GM12878 (cell line): ENCODE measurements at regions of chr15 and their contacts with region 1.

Region 1: DNA sequence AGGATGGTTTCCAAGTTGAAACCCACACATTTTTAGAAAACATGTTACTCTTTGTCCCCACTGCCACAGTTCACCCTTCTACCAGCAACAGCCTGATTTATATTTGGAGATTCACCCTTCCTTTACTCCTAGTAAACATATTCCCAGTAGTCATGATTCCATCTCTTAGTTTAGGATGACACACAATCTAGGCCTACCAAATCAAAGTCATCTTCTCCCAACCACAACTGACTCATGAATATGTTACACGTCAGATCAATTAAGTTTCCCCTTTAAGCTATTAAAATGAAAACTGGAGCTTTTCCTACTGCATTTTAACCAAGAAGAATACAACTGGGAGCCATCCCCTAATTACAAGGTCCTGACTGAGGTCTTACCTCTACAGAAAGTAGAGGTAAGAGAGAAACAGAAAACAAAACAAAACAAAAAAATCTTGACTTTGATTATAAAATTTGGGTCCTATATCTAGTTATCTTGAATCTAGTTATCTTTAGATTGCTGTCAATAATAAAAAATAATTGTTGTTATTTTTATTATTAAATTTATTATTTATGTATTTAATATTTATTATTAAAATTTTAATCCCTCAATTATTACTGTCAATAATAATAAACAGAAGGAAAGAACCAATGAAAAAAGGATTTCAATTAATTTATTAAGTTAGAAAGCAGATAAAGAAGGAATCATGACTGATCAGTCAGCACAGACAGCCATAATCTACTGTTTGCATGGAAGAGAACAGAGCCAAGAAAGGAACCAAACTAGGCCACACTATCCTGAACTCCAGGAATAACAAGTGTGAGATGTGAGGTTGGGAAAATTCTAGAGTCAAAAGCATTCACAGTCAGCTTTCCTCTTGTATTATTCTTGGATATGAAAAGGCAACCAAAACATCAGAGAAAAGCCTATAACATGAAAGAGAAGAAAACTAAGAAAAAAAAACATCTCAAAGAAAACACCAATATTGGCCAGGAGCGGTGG is 12.5 kb downstream of the DPH6 start:
- DNase-seq: no peak
- ATAC-seq: no peak
- H3K4me3 ChIP-seq: no peak overlapping the region
- H3K27ac ChIP-seq: no peak overlapping the region
- H3K4me1 ChIP-seq: no peaks in the 10 kb centered on the region
- H3K27me3 ChIP-seq: no peaks in the 10 kb centered on the region
- CTCF ChIP-seq: no peak
- EP300 ChIP-seq: no peak
- POLR2A ChIP-seq: no peak
- RAD21 ChIP-seq: no peak

Region 2: DNA sequence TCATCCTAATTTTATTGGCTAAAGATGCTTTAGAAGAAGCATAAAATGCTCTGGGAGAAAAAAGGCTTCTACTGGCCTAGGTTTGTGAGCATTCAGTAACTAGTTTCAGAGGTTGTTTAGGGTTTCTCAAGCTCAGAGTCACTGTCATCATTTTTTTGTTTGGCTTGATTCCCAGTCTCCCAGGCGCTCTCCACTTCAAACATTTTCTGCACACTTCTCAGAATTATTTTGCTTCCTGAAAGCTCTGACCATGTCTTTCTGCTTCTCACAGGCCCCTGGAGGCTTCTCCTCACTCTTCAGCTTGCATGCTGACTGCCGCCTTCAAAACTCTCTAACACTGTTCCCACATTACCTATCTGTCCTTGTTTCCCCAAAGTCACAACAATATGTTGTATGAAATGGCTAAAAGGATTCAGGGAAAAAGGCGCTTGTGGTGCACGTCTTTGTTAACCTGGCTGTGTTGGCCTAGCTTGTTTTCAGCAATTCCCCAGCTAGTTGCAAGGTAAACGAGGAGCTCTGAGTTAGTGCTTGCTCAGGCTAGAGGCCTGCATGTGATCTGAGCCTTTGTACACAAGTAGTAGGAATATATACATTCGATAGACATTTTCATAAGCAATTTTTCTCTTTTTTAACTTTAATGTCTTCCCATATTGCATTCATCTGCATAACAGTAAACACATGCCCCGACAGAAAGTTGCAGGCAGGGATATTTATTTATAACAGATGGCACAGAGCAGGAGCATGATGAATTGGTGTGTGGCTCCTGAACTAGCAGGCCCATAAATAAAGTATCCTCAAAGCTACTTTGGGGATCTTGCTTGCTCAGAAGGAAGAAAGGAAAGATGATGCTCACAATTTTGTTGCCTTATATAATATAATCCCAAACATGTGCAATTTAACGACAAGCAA is 141.7 kb after region 1 on chr15:
- CTCF ChIA-PET with region 1: no interaction called
- POLR2A ChIA-PET with region 1: no interaction called
- RAD21 ChIA-PET with region 1: no interaction called
- SMC1A ChIA-PET with region 1: no interaction called
- in situ Hi-C with region 1: no loop called
- intact Hi-C with region 1: loop called (anchors 10 kb)
- DNase-seq: peak; percentile 12
- ATAC-seq: no peak
- H3K4me3 ChIP-seq: no peak overlapping the region
- H3K27ac ChIP-seq: no peak overlapping the region
- H3K4me1 ChIP-seq: no peaks in the 10 kb centered on the region
- H3K27me3 ChIP-seq: no peaks in the 10 kb centered on the region
- CTCF ChIP-seq: no peak
- EP300 ChIP-seq: no peak
- POLR2A ChIP-seq: no peak
- RAD21 ChIP-seq: no peak